Activated CD8-positive, alpha-beta T cell treated with anti-CD3 and anti-CD28 coated beads for 36 hours (primary cell): ENCODE measurements at regions of chr12 and their contacts with region 1.

Region 1: DNA sequence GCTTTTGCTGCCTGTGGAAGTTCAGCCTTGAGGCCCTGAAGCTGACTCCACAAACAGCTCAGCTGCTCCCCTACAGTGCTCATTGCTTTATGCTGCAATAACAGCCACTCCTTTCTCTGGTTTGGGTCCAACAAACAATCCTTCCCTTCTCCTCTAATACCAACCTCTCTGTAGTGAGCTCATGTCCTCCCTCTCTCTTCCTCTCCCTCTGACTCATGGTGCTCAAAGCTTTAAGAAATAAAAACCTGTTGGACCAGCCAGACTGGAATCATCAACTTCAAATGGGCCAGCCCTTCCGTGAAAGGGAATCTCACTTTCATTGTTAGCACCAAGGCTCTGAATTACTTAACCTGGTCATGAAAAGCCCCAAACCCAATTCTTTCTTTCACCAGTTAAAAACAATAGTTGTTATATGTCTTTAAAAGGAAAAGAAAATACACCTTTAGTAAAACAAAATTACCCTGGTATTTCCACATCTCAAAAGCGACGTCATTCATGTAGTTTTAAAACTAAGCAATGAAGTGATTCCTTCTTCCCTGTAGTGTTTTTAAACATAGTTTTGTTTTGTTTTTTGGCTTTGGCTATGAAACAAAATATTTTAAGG is 126.4 kb downstream of the DUSP6 start:
- DNase-seq: peak; percentile 44
- ATAC-seq: peak; percentile 64
- H3K4me3 Mint-ChIP-seq: peak overlapping the region; percentile 55
- H3K27ac Mint-ChIP-seq: peak overlapping the region; percentile 98
- H3K4me1 Mint-ChIP-seq: peaks cover 46% of the 10 kb centered on the region
- H3K27me3 Mint-ChIP-seq: peaks cover 2% of the 10 kb centered on the region
- CTCF ChIP-seq: no peak

Region 2: GRCh38 chr12:89244536-89244935 is 18.6 kb after region 1 on chr12:
- CTCF ChIA-PET with region 1: interaction called, 17 read pairs
- POLR2A ChIA-PET with region 1: interaction called, 7 read pairs
- intact Hi-C with region 1: no loop called
- DNase-seq: peak; percentile 45
- ATAC-seq: peak; percentile 86
- H3K4me3 Mint-ChIP-seq: peak overlapping the region; percentile 40
- H3K27ac Mint-ChIP-seq: peak overlapping the region; percentile 83
- H3K4me1 Mint-ChIP-seq: peaks cover 34% of the 10 kb centered on the region
- H3K27me3 Mint-ChIP-seq: peaks cover 3% of the 10 kb centered on the region
- CTCF ChIP-seq: no peak

Region 3: GRCh38 chr12:89345830-89346740 is 120.2 kb after region 1 on chr12:
- CTCF ChIA-PET with region 1: no interaction called
- POLR2A ChIA-PET with region 1: interaction called, 6 read pairs
- intact Hi-C with region 1: loop called (anchors 5 kb)
- DNase-seq: peak; percentile 65
- ATAC-seq: peak; percentile 85
- H3K4me3 Mint-ChIP-seq: peak overlapping the region; percentile 58
- H3K27ac Mint-ChIP-seq: peak overlapping the region; percentile 31
- H3K4me1 Mint-ChIP-seq: peaks cover 39% of the 10 kb centered on the region
- H3K27me3 Mint-ChIP-seq: peaks cover 24% of the 10 kb centered on the region
- CTCF ChIP-seq: no peak

Region 4: DNA sequence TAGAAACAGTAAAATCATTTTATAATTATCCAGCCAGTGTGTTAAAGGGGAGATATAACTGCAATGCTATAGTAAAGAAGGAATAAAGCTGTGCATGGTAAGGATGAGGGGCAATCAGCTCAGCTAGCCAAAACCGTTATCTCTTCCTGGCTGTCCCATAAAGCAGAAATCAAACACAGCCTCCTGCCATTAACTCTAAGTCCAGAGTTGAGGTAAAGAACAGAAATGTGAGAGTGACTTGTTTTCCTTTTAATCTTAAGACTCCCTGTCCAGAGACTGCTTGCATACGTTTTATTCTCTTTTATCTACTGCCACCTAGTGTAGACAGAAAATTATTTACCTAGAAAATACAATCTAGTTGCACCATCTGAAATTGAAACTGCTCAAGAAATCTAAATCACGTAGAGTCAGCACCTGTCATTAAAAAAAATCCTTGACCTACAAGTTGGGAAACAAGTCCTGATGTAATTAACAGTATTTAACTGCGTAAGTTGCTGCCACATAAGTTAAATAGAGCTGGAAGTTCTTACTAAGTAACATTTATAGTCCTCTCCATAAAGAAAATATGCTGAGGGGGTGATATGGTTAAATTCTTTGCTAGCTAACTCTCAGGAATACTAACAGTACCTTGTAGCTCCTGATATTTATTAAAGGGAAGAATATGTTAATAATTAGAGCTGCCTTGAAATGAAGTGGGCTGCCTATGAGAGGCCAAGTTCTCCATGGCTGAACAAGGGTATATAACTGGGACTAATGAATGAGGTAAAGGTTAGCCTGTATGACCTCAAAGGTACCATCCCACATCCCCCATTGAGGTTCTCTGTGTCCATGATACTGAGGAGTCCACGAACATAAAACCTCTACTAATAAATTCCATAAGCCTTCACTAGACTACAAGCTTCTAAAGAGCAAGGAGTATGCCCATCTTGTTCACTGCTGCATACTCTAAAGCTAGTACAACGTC is 236.0 kb after region 1 on chr12:
- CTCF ChIA-PET with region 1: no interaction called
- POLR2A ChIA-PET with region 1: no interaction called
- intact Hi-C with region 1: loop called (anchors 10 kb)
- DNase-seq: no peak
- ATAC-seq: peak; percentile 91
- H3K4me3 Mint-ChIP-seq: peak overlapping the region; percentile 46
- H3K27ac Mint-ChIP-seq: peak overlapping the region; percentile 79
- H3K4me1 Mint-ChIP-seq: peaks cover 32% of the 10 kb centered on the region
- H3K27me3 Mint-ChIP-seq: no peaks in the 10 kb centered on the region
- CTCF ChIP-seq: peak; percentile 76